ENCODE measurements at regions of chr6 and their contacts with region 1.

Region 1: GRCh38 chr6:124881898-124882579 is 80.2 kb upstream of the RNF217 start:
- DNase-seq: no peak
- H3K4me3 ChIP-seq: no peak overlapping the region
- H3K27ac ChIP-seq: no peak overlapping the region
- H3K4me1 ChIP-seq: peaks cover 0 to 19% (median 12%) of the 10 kb centered on the region in 6 donors
- H3K27me3 ChIP-seq: no peaks in the 10 kb centered on the region
- CTCF ChIP-seq: no peak
- POLR2A ChIP-seq: no peak

Region 2: DNA sequence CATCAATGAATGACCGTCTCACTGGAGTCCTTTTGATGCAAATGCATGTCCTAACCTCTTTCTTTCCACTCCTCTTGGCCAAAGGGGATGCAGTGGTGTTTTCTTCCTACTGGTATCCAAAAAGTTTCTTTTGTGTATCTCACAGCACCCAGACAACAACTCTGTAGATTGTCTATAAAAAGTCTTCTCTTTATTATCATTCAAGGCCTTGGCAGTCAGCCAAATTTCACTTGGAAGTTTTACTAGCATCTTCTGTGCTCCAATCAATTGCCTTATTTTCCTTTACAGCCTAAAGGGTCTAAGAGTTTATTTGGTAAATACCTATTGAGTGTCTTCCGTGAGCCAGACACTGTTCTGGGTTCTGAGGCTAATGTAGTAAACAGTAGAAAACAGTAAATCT is 70.0 kb before region 1 on chr6:
- intact Hi-C with region 1: no loop called
- DNase-seq: no peak
- H3K4me3 ChIP-seq: no peak overlapping the region
- H3K27ac ChIP-seq: no peak overlapping the region
- H3K4me1 ChIP-seq: no peaks in the 10 kb centered on the region
- H3K27me3 ChIP-seq: no peaks in the 10 kb centered on the region
- CTCF ChIP-seq: no peak
- POLR2A ChIP-seq: no peak

Region 3: GRCh38 chr6:125107896-125108295 is 225.9 kb after region 1 on chr6:
- intact Hi-C with region 1: loop called (anchors 5 kb)
- DNase-seq: no peak
- H3K4me3 ChIP-seq: no peak overlapping the region
- H3K27ac ChIP-seq: no peak overlapping the region
- H3K4me1 ChIP-seq: no peaks in the 10 kb centered on the region
- H3K27me3 ChIP-seq: no peaks in the 10 kb centered on the region
- CTCF ChIP-seq: no peak
- POLR2A ChIP-seq: no peak

Region 4: GRCh38 chr6:125236536-125237327 is 354.7 kb after region 1 on chr6:
- intact Hi-C with region 1: no loop called
- DNase-seq: no peak
- H3K4me3 ChIP-seq: no peak overlapping the region
- H3K27ac ChIP-seq: no peak overlapping the region
- H3K4me1 ChIP-seq: no peaks in the 10 kb centered on the region
- H3K27me3 ChIP-seq: no peaks in the 10 kb centered on the region
- CTCF ChIP-seq: no peak
- POLR2A ChIP-seq: no peak

Measured in spleen (tissue), 13 donors.